ENCODE measurements at regions of chr12 and their contacts with region 1.

Region 1: DNA sequence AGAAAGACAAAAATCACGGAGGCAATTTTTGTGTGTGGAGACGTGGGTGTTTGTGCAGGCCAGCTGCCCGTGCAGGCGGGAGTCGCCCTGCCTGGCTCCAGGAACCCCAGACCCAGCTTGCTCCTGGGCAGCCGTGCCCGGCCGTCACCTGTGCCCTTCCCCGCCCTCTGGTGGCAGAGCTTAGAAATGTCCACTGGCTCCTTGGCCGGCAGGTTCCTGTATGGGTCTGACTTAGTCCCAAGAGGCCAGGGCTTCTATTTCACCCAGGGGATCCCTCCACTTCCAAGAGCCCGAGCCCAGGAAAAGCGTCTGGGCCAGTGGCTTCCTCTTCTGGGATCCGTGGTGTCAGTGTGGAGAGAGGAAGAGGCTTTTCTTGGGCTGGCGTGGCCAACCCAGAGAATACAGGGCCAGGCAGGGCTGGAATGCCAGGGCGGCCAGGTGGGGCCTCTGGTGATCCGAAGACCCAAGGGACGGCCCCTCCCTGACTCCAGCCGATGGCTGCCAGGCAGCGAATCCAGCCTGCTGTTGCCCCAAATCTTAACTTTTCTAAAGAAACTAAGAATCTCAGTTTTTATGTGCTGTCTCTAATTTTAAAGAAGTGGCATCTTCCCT is 120.9 kb downstream of the TMEM132C start:
- DNase-seq: peak; percentile 10
- ATAC-seq: peak; percentile 87
- H3K4me3 ChIP-seq: no peak overlapping the region
- H3K27ac ChIP-seq: no peak overlapping the region
- H3K4me1 ChIP-seq: no peaks in the 10 kb centered on the region
- H3K27me3 ChIP-seq: no peaks in the 10 kb centered on the region; the same call in 1 of the 2 replicates
- CTCF ChIP-seq: peak; percentile 90

Region 2: GRCh38 chr12:128259556-128260070 is 128.3 kb before region 1 on chr12:
- CTCF ChIA-PET with region 1: interaction called, 16 read pairs
- POLR2A ChIA-PET with region 1: no interaction called
- in situ Hi-C with region 1: no loop called
- intact Hi-C with region 1: loop called (anchors 2 kb)
- DNase-seq: no peak
- ATAC-seq: no peak
- H3K4me3 ChIP-seq: no peak overlapping the region
- H3K27ac ChIP-seq: no peak overlapping the region
- H3K4me1 ChIP-seq: no peaks in the 10 kb centered on the region
- H3K27me3 ChIP-seq: no peaks in the 10 kb centered on the region
- CTCF ChIP-seq: peak; percentile 81

Region 3: GRCh38 chr12:128361400-128361995 is 26.4 kb before region 1 on chr12:
- CTCF ChIA-PET with region 1: no interaction called
- POLR2A ChIA-PET with region 1: no interaction called
- in situ Hi-C with region 1: no loop called
- intact Hi-C with region 1: no loop called
- DNase-seq: no peak
- ATAC-seq: no peak
- H3K4me3 ChIP-seq: no peak overlapping the region
- H3K27ac ChIP-seq: no peak overlapping the region
- H3K4me1 ChIP-seq: no peaks in the 10 kb centered on the region
- H3K27me3 ChIP-seq: no peaks in the 10 kb centered on the region; the same call in 1 of the 2 replicates
- CTCF ChIP-seq: no peak